Stomach (tissue), 19 donors: ENCODE measurements at regions of chr18 and their contacts with region 1.

Region 1: GRCh38 chr18:2571200-2572143 is at the starts of genes METTL4 and NDC80:
- DNase-seq: peak; percentile 84 to 97
- H3K4me3 ChIP-seq: peak within 1 kb of the TSS; percentile 67 to 68 (median 67)
- H3K27ac ChIP-seq: peak within 1 kb of the TSS; percentile 93 to 97 (median 95)
- H3K4me1 ChIP-seq: peaks cover 9 to 43% (median 25%) of the 10 kb centered on the region in 4 donors
- H3K27me3 ChIP-seq: no peaks in the 10 kb centered on the region
- CTCF ChIP-seq: no peak
- EP300 ChIP-seq: no peak
- POLR2A ChIP-seq: peak in 1 of 4 donors; percentile 41
- total RNA-seq, gene METTL4: 0.89 to 17.1 (median 3.5) TPM
- total RNA-seq, gene NDC80: 1.4 to 25.7 (median 3.6) TPM

Region 2: DNA sequence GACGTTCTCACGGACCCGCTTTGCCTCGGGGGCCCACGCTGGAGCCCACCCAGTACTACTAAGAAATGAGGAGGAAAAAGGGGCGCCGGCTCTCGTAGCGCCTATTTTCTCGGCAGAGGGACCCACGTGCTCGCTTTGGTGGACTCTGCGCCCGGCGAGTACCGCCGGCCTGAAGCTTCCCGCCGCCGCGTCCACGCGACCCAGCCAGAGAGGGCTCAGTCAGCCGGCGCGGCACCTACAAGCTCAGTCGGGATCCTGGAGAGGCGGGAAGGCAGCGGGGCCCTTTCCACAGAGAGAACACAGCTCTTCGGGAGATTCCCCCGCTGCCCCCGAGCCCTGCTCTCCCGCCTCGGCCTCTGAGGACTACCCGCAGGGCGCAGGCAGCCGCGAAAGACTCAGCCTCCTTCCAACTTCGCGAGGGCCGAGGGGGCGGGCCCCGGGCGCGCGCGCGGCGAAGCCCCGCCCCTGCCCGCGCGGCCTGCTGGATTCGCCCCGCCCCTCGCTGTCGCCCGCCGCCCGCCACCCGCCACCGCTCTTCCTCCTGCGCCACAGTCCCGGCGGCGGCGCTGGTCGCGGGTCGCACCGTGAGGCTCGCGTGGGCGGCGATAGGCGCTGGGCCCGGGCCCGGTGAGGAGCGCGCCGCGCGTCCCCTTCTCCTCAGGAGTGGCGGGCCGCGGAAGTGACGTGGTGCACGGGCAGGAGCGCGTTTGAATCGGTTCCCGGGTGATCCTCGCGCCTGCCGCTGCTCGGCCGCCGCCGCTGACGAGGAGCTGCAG is 83.9 kb after region 1 on chr18 and contains the start of gene SMCHD1:
- intact Hi-C with region 1: loop called (anchors 10 kb)
- DNase-seq: peak; percentile 92 to 95
- H3K4me3 ChIP-seq: peak within 1 kb of the TSS; percentile 77 to 93 (median 86)
- H3K27ac ChIP-seq: peak within 1 kb of the TSS; percentile 93 to 99 (median 98)
- H3K4me1 ChIP-seq: peaks cover 15 to 52% (median 36%) of the 10 kb centered on the region in 4 donors
- H3K27me3 ChIP-seq: no peaks in the 10 kb centered on the region
- CTCF ChIP-seq: no peak
- EP300 ChIP-seq: no peak
- POLR2A ChIP-seq: no peak
- total RNA-seq, gene SMCHD1: 53.6 to 377 (median 107) TPM

Region 3: GRCh38 chr18:2758309-2758708 is 186.8 kb after region 1 on chr18:
- intact Hi-C with region 1: no loop called
- DNase-seq: no peak
- H3K4me3 ChIP-seq: no peak overlapping the region
- H3K27ac ChIP-seq: no peak overlapping the region
- H3K4me1 ChIP-seq: no peaks in the 10 kb centered on the region
- H3K27me3 ChIP-seq: no peaks in the 10 kb centered on the region
- CTCF ChIP-seq: no peak
- EP300 ChIP-seq: no peak
- POLR2A ChIP-seq: no peak